PC-9 (cell line): ENCODE measurements at regions of chr3 and their contacts with region 1.

Region 1: GRCh38 chr3:132210476-132211346 is 106.5 kb upstream of the ACP3 start:
- DNase-seq: peak in 1 of 2 experiments; percentile 55
- H3K4me3 ChIP-seq: no peak overlapping the region
- H3K27ac ChIP-seq: no peak overlapping the region
- H3K4me1 ChIP-seq: peaks cover 7% of the 10 kb centered on the region; the same call in 1 of the 2 replicates
- H3K27me3 ChIP-seq: no peaks in the 10 kb centered on the region
- CTCF ChIP-seq: peak; percentile 86

Region 2: DNA sequence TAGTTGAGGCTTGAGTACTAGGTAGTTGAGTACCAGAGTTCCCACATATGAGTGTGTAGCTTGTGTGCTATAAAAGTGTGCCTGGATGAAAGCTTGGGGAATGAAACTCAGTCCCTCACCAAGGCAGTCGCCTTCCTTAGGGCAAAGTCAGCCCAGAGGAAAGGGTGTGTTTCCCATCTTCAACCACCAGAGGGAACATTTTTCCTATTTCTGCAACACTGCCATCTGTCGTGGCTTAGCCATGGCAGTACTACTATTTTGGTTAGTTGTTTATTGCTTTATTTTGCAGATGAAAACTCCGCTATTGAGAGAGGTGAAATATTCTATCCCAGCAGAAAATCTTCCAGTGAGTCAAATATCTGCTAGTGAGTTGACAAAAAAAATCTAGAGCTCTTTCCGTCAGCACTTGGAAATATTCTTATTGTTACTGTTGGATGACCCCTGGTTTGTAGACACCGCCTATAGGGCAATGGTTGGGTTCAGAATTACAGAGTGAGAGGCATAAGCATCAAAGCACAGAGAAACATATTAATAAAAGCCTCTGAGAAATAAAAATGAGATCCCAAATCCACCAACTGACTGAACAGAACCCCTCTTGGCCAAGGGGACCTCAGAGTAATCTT is 415.8 kb before region 1 on chr3:
- CTCF ChIA-PET with region 1: no interaction called
- POLR2A ChIA-PET with region 1: no interaction called
- intact Hi-C with region 1: loop called (anchors 1 kb)
- DNase-seq: peak; percentile 32 to 44
- H3K4me3 ChIP-seq: no peak overlapping the region
- H3K27ac ChIP-seq: no peak overlapping the region
- H3K4me1 ChIP-seq: peaks cover 8% of the 10 kb centered on the region
- H3K27me3 ChIP-seq: no peaks in the 10 kb centered on the region
- CTCF ChIP-seq: peak; percentile 87